A549 (cell line): ENCODE measurements at regions of chr17 and their contacts with region 1.

Region 1: GRCh38 chr17:63478791-63479494 is 2.1 kb downstream of the ACE start:
- DNase-seq: peak; percentile 92 to 99
- ATAC-seq: peak; percentile 84 to 95
- H3K4me3 ChIP-seq: no peak overlapping the region
- H3K27ac ChIP-seq: peak overlapping the region in 1 of 2 experiments; percentile 57; a peak in 3 of 6 replicates
- H3K4me1 ChIP-seq: peaks cover 13% of the 10 kb centered on the region
- CTCF ChIP-seq: peak; percentile 90
- EP300 ChIP-seq: no peak
- POLR2A ChIP-seq: no peak
- RAD21 ChIP-seq: peak; percentile 84 to 88

Region 2: DNA sequence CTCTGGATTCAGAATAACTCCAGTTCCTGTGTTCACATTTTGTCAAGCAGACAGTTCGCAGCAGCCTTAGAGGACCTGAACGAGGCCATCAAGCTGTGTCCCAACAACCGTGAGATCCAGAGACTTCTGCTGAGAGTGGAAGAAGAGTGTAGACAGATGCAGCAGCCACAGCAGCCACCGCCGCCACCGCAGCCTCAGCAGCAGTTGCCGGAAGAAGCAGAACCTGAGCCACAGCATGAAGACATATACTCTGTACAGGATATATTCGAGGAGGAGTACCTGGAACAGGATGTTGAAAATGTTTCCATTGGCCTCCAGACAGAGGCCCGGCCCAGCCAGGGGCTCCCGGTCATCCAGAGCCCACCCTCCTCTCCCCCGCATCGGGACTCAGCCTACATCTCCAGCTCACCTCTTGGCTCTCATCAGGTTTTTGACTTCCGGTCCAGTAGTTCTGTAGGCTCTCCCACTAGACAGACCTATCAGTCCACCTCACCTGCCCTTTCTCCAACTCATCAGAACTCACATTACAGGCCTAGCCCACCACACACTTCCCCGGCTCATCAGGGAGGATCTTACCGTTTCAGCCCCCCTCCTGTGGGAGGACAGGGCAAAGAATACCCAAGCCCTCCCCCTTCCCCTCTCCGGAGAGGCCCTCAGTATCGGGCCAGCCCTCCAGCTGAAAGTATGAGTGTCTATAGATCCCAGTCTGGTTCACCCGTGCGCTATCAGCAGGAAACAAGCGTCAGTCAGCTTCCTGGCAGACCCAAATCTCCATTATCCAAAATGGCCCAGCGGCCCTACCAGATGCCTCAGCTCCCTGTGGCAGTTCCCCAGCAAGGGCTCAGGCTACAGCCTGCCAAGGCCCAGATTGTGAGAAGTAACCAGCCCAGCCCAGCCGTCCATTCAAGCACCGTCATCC is 58.7 kb before region 1 on chr17:
- CTCF ChIA-PET with region 1: interaction called, 188 read pairs
- POLR2A ChIA-PET with region 1: interaction called, 4 read pairs
- DNase-seq: no peak
- ATAC-seq: no peak
- H3K4me3 ChIP-seq: no peak overlapping the region
- H3K27ac ChIP-seq: no peak overlapping the region
- H3K4me1 ChIP-seq: no peaks in the 10 kb centered on the region
- CTCF ChIP-seq: no peak
- EP300 ChIP-seq: no peak
- POLR2A ChIP-seq: no peak
- RAD21 ChIP-seq: no peak

Region 3: GRCh38 chr17:63458478-63458877 is 20.5 kb before region 1 on chr17:
- CTCF ChIA-PET with region 1: interaction called, 44 read pairs
- POLR2A ChIA-PET with region 1: no interaction called
- DNase-seq: no peak
- ATAC-seq: 0 out of 6 replicates have a peak, but pooled peaks of 1 of the 2 experiments have one; percentile 8
- H3K4me3 ChIP-seq: no peak overlapping the region
- H3K27ac ChIP-seq: no peak overlapping the region
- H3K4me1 ChIP-seq: peaks cover 25% of the 10 kb centered on the region
- CTCF ChIP-seq: no peak
- EP300 ChIP-seq: no peak
- POLR2A ChIP-seq: no peak
- RAD21 ChIP-seq: no peak

Region 4: GRCh38 chr17:63497708-63498483 is 19.0 kb after region 1 on chr17:
- CTCF ChIA-PET with region 1: interaction called, 111 read pairs
- POLR2A ChIA-PET with region 1: no interaction called
- DNase-seq: peak in 1 of 2 experiments; percentile 45
- ATAC-seq: peak; percentile 56 to 84; a peak in 5 of 6 replicates
- H3K4me3 ChIP-seq: no peak overlapping the region
- H3K27ac ChIP-seq: no peak overlapping the region
- H3K4me1 ChIP-seq: no peaks in the 10 kb centered on the region
- CTCF ChIP-seq: peak; percentile 16; the same call in 2 of the 3 replicates
- EP300 ChIP-seq: no peak
- POLR2A ChIP-seq: no peak
- RAD21 ChIP-seq: no peak

Region 5: DNA sequence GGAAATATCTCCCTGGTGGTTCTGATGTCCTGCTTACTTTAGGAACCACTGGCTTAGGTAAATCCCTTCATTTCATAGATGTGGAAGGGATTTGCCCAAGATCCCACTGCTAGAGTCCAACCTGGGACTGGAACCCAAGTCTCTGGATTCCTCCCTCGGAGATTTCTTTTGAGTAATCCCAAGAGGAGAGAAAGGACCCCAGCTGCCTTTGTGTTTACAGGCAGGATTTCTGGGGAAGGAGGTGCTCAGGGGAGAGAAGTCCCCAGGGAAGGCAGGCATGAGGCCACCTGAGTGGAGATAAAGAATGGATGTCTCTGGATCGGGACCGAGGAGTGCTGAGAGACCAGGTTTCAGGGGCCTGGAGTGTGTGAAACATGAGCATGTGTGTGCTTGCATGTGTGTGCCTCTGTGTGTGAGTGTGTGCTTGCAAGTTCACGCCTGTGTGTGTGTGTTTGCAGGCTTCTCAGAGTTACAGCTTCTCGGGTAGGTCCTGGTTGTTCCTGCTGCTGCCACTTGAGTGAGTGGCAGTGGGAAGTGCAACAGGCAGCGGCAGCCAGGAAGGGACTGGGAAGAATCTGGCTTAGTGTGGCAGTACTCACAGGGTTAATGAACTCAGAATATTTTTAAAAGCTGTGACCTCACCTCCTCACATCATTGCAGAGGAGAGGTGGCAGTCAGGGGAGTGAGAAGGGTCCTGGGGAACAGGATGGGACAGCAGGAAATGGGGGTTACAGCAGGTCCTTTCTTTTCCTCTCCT is 46.4 kb after region 1 on chr17:
- CTCF ChIA-PET with region 1: interaction called, 17 read pairs
- POLR2A ChIA-PET with region 1: no interaction called
- DNase-seq: no peak
- ATAC-seq: no peak
- H3K4me3 ChIP-seq: no peak overlapping the region
- H3K27ac ChIP-seq: no peak overlapping the region
- H3K4me1 ChIP-seq: peaks cover 9% of the 10 kb centered on the region
- CTCF ChIP-seq: no peak
- EP300 ChIP-seq: no peak
- POLR2A ChIP-seq: no peak
- RAD21 ChIP-seq: no peak